Prostate gland (tissue), 2 donors: ENCODE measurements at regions of chr15 and their contacts with region 1.

Region 1: GRCh38 chr15:33700695-33701304 is 267.5 kb upstream of the CHRM5 start:
- DNase-seq: peak; percentile 57
- H3K4me3 ChIP-seq: no peak overlapping the region
- H3K27ac ChIP-seq: no peak overlapping the region
- H3K4me1 ChIP-seq: no peaks in the 10 kb centered on the region
- H3K27me3 ChIP-seq: no peaks in the 10 kb centered on the region
- CTCF ChIP-seq: peak; percentile 70 to 80 (median 76)
- POLR2A ChIP-seq: no peak

Region 2: DNA sequence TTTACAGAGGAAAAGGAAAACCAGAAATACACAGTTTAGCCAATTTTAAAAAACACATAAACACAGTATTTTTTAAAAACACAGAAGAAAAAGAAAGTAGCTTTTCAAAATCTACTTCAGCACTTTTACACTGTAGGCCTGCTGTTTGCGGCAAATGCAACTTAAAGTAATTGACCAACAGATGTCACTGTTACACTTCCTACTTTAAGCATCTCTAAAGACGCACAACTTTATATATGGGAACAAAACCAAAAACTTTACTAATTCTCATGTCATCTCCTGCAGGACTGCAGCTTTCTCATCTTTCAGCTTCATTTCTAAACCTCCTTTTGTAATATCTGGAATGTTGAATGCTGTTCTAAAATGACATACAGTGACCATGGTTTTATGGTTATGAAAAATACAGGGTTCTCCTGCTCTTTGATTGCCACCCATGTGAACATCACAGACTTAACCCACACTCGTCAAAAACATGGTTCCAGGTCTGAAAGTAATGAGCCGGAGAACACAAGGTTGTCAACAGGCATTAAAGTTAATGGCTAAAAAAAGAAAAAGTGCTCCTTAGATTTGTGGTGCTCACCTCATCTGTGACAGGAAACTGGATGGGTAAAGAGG is 614.2 kb before region 1 on chr15:
- intact Hi-C with region 1: loop called (anchors 10 kb)
- DNase-seq: no peak
- H3K4me3 ChIP-seq: no peak overlapping the region
- H3K27ac ChIP-seq: no peak overlapping the region
- H3K4me1 ChIP-seq: no peaks in the 10 kb centered on the region
- H3K27me3 ChIP-seq: no peaks in the 10 kb centered on the region
- CTCF ChIP-seq: peak in 3 of 4 experiments; percentile 43 to 63 (median 51)
- POLR2A ChIP-seq: no peak

Region 3: DNA sequence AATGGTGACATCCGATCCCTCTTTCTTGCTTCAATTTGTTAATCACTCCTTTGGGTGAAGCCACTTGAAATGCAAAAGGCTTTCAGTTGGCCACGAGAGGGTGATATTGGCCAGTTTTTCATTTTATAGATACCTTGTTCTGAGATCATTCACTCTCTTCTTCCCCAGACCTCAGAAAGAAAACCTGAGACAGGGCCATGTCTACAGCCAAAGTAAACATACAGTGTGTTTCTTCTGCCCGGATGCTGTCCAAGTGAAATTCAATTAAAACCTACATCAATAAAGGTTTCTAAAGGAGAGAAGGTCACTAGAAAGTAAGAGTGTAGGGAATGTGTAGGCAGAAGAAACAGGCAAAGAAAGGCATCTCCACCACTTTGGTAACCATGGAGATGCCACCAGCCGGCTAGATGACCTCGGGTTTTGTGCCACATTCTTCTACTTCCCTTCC is 466.8 kb before region 1 on chr15:
- intact Hi-C with region 1: loop called (anchors 10 kb)
- DNase-seq: peak; percentile 67
- H3K4me3 ChIP-seq: no peak overlapping the region
- H3K27ac ChIP-seq: no peak overlapping the region
- H3K4me1 ChIP-seq: peaks cover 3% of the 10 kb centered on the region
- H3K27me3 ChIP-seq: no peaks in the 10 kb centered on the region
- CTCF ChIP-seq: peak in 3 of 4 experiments; percentile 51 to 63 (median 63)
- POLR2A ChIP-seq: no peak

Region 4: GRCh38 chr15:33292717-33293307 is 408.0 kb before region 1 on chr15:
- intact Hi-C with region 1: loop called (anchors 2 kb)
- DNase-seq: peak; percentile 54
- H3K4me3 ChIP-seq: no peak overlapping the region
- H3K27ac ChIP-seq: no peak overlapping the region
- H3K4me1 ChIP-seq: no peaks in the 10 kb centered on the region
- H3K27me3 ChIP-seq: no peaks in the 10 kb centered on the region
- CTCF ChIP-seq: peak; percentile 19 to 66 (median 60)
- POLR2A ChIP-seq: no peak